IMR-90 (cell line): ENCODE measurements at regions of chr9 and their contacts with region 1.

Region 1: DNA sequence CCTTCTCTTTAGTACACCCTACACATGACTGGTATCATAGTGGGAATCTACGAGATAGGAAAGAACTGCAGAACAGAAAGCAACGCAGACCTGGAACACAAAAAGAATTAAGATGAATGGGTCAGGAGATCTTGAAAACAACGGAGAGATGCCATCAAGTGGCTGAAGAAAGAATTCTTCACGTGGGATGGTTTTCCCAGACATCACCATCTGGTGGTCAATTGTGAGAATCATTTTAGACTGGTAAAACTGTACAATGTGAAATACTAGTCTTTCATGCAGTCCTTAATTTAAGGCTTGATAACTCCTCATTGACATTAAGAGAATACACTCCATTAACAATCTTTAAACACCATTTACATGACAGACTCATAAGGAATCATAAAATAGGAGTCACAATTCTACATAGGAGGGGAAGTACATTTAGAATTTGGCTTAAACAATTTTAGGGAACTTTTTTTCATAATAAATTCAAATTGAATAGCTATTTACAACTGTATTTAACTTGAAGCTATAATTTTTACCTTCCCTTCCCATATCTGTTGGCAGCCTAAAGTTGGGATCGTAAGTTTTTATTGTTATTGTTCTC is 128.4 kb upstream of the TRPM3 start:
- DNase-seq: peak; percentile 64
- ATAC-seq: peak; percentile 91
- H3K4me3 ChIP-seq: no peak overlapping the region
- H3K27ac ChIP-seq: no peak overlapping the region
- H3K4me1 ChIP-seq: no peaks in the 10 kb centered on the region
- H3K27me3 ChIP-seq: no peaks in the 10 kb centered on the region
- CTCF ChIP-seq: peak; percentile 93
- POLR2A ChIP-seq: no peak
- RAD21 ChIP-seq: peak; percentile 64

Region 2: DNA sequence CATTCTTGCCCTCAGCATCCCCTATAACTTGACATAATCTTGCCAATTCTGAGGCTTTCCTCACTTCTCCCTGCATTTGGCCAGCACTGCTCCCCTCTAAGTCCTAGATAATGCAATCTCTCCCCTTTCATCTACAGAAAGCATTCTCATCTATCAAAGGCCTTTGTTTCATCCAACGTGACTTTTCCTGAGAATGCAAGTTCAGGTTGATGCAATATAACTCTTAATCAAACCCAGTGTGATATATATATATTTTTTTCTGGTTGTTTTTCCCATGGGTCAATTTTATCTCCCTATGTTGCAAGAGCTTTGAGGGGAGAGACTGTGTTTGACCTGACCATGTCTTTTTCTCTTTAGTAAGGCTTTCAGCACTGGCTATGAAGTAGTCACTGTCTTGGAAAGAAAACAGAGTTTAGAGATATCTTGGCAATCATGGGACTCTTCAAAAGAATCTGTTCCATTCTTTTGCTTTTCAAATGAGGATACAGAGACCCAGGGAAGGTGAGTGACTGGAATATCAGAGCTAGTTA is 397.0 kb before region 1 on chr9:
- CTCF ChIA-PET with region 1: no interaction called
- POLR2A ChIA-PET with region 1: no interaction called
- dilution Hi-C with region 1: no loop called
- in situ Hi-C with region 1: no loop called
- intact Hi-C with region 1: loop called (anchors 5 kb)
- DNase-seq: no peak
- ATAC-seq: no peak
- H3K4me3 ChIP-seq: no peak overlapping the region
- H3K27ac ChIP-seq: no peak overlapping the region
- H3K4me1 ChIP-seq: no peaks in the 10 kb centered on the region
- H3K27me3 ChIP-seq: peaks cover 2% of the 10 kb centered on the region; the same call in 1 of the 2 replicates
- CTCF ChIP-seq: no peak
- POLR2A ChIP-seq: no peak
- RAD21 ChIP-seq: no peak

Region 3: GRCh38 chr9:70911791-70912190 is 338.0 kb before region 1 on chr9:
- CTCF ChIA-PET with region 1: no interaction called
- POLR2A ChIA-PET with region 1: no interaction called
- dilution Hi-C with region 1: no loop called
- in situ Hi-C with region 1: loop called (anchors 10 kb)
- intact Hi-C with region 1: no loop called
- DNase-seq: no peak
- ATAC-seq: no peak
- H3K4me3 ChIP-seq: no peak overlapping the region
- H3K27ac ChIP-seq: no peak overlapping the region
- H3K4me1 ChIP-seq: no peaks in the 10 kb centered on the region
- H3K27me3 ChIP-seq: peaks cover 5% of the 10 kb centered on the region
- CTCF ChIP-seq: no peak
- POLR2A ChIP-seq: no peak
- RAD21 ChIP-seq: no peak

Region 4: GRCh38 chr9:71036501-71036900 is 213.3 kb before region 1 on chr9:
- CTCF ChIA-PET with region 1: no interaction called
- POLR2A ChIA-PET with region 1: no interaction called
- dilution Hi-C with region 1: no loop called
- in situ Hi-C with region 1: no loop called
- intact Hi-C with region 1: no loop called
- DNase-seq: no peak
- ATAC-seq: no peak
- H3K4me3 ChIP-seq: no peak overlapping the region
- H3K27ac ChIP-seq: no peak overlapping the region
- H3K4me1 ChIP-seq: no peaks in the 10 kb centered on the region
- H3K27me3 ChIP-seq: no peaks in the 10 kb centered on the region; the same call in 1 of the 2 replicates
- CTCF ChIP-seq: no peak
- POLR2A ChIP-seq: no peak
- RAD21 ChIP-seq: no peak

Region 5: GRCh38 chr9:71157731-71158130 is 92.1 kb before region 1 on chr9:
- CTCF ChIA-PET with region 1: no interaction called
- POLR2A ChIA-PET with region 1: no interaction called
- dilution Hi-C with region 1: no loop called
- in situ Hi-C with region 1: no loop called
- intact Hi-C with region 1: no loop called
- DNase-seq: no peak
- ATAC-seq: no peak
- H3K4me3 ChIP-seq: no peak overlapping the region
- H3K27ac ChIP-seq: no peak overlapping the region
- H3K4me1 ChIP-seq: no peaks in the 10 kb centered on the region
- H3K27me3 ChIP-seq: no peaks in the 10 kb centered on the region
- CTCF ChIP-seq: no peak
- POLR2A ChIP-seq: no peak
- RAD21 ChIP-seq: no peak